Naive thymus-derived CD4-positive, alpha-beta T cell (primary cell): ENCODE measurements at regions of chrX and their contacts with region 1.

Region 1: DNA sequence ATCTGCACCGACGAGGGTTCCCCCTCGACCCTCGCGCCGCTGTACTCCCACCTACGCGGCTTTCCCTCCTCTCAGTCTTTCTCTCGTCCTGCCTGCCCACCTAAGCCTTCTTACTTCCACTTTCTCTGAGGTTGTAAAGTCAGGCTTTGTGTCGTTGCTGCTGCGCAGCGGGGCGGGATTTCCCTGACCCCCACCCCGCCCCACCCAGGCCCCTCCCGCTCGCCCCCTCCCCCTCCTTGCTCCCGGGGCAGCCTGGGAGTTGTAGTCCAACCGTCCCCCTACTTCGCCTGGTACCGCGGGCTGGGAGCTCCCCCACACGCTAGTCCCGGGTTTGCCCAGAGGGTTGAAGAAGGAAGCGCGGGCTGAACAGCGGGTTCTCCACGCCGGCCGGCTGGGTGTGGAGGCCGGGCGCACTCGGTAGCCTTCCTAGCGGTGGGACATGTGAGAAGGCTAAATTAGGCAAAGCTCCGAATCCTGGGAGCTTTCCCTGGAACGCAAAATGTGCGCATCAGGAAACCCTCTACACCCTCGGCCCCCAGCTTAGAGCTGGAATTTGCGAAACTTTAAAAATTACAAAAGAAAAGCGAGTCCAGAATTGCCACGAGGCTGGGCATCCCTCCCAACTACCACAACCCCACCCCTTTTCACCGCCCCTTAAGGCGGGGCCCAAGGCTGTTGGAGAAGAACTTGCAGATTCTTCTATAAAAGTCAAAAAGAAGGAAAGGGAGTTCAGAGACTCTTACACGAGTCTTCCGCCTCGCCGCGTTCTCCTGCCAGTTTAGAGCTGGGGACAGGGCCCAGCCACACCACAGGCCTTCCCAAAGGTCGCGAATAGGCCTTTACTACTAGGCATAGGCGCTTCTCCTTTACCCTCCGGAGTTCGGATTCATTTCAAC is at the start of gene ATP11C:
- DNase-seq: peak; percentile 55 to 81 (median 78)
- ATAC-seq: peak; percentile 92
- H3K4me3 ChIP-seq: peak within 1 kb of the TSS; percentile 75
- H3K4me3 Mint-ChIP-seq: peak within 1 kb of the TSS; percentile 86 to 99 (median 94)
- H3K27ac ChIP-seq: peak within 1 kb of the TSS; percentile 97
- H3K27ac Mint-ChIP-seq: peak within 1 kb of the TSS; percentile 93 to 99 (median 97)
- H3K4me1 ChIP-seq: peaks cover 0 to 8% of the 10 kb centered on the region in 2 donors
- H3K4me1 Mint-ChIP-seq: peaks cover 0 to 35% (median 27%) of the 10 kb centered on the region in 7 donors
- H3K27me3 ChIP-seq: no peaks in the 10 kb centered on the region
- H3K27me3 Mint-ChIP-seq: no peaks in the 10 kb centered on the region
- total RNA-seq, gene ATP11C: 13.8 to 27.5 (median 22.6) TPM

Region 2: DNA sequence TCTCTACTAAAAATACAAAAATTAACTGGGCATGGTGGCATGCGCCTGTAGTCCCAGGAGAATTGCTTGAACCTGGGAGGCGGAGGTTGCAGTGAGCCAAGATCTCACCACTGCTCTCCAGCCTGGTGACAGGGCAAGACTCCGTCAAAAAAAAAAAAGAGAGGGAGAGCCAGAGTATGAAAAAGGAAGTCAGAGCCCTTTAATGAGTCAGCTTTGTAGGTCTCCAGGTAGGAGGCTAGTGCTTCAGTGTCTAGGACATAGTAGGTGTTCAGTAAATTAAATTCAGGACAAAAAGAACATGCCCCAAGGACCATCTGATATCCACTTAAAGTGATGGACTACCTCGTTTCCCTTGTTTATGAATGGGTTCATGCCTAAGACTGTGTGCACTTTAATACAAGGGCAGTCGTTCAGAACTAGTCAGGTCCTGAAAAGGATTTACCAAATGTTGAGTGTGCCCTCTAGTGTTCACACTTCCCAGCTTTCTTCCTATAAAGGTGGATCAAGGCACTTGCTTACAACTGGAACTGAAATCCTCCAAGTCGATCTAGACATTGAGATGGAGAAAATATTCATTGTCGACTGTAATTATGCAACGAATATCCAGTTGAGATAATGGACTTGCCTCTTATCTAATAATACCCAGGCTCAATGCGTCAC is 373.6 kb before region 1 on chrX:
- CTCF ChIA-PET with region 1: no interaction called
- POLR2A ChIA-PET with region 1: no interaction called
- intact Hi-C with region 1: loop called in 1 of 2 experiments (anchors 10 kb)
- DNase-seq: peak in 2 of 9 donors; percentile 7 to 11
- ATAC-seq: no peak
- H3K4me3 ChIP-seq: no peak overlapping the region
- H3K4me3 Mint-ChIP-seq: no peak overlapping the region
- H3K27ac ChIP-seq: no peak overlapping the region
- H3K27ac Mint-ChIP-seq: no peak overlapping the region
- H3K4me1 ChIP-seq: no peaks in the 10 kb centered on the region
- H3K4me1 Mint-ChIP-seq: peaks cover 0 to 3% (median 0%) of the 10 kb centered on the region in 7 donors
- H3K27me3 ChIP-seq: no peaks in the 10 kb centered on the region
- H3K27me3 Mint-ChIP-seq: peaks cover 0 to 8% (median 4%) of the 10 kb centered on the region in 5 donors

Region 3: DNA sequence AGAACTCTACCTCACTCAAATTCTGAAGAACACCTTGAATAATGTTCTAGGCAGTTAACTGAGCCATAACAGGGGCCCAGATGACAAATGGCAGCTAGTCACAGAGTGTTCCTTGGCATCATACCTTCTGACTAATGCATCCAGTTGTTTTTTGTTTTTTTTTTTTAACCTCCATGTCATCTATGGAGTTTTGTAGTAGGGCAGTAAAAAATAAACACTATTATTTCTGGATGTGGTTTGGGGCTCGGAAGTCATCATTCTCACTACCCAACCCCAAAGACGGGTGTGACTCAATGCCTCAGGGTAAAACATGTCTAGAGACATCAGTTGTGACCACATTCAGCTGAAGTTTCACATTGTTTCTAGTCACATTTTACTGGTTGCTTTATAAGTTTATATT is 194.0 kb before region 1 on chrX:
- CTCF ChIA-PET with region 1: no interaction called
- POLR2A ChIA-PET with region 1: no interaction called
- intact Hi-C with region 1: loop called in 1 of 2 experiments (anchors 5 kb)
- DNase-seq: peak in 1 of 9 donors; percentile 21
- ATAC-seq: peak; percentile 47
- H3K4me3 ChIP-seq: no peak overlapping the region
- H3K4me3 Mint-ChIP-seq: peak overlapping the region in 2 of 10 donors; percentile 39 to 46
- H3K27ac ChIP-seq: no peak overlapping the region
- H3K27ac Mint-ChIP-seq: peak overlapping the region in 3 of 9 donors; percentile 39 to 73 (median 41)
- H3K4me1 ChIP-seq: peaks cover 0 to 5% of the 10 kb centered on the region in 2 donors
- H3K4me1 Mint-ChIP-seq: peaks cover 0 to 25% (median 0%) of the 10 kb centered on the region in 7 donors
- H3K27me3 ChIP-seq: no peaks in the 10 kb centered on the region
- H3K27me3 Mint-ChIP-seq: no peaks in the 10 kb centered on the region

Region 4: GRCh38 chrX:139766545-139766983 is 166.6 kb before region 1 on chrX:
- CTCF ChIA-PET with region 1: no interaction called
- POLR2A ChIA-PET with region 1: interaction called, 3 read pairs
- intact Hi-C with region 1: loop called in 1 of 2 experiments (anchors 2 kb)
- DNase-seq: peak in 8 of 9 donors; percentile 10 to 61 (median 42)
- ATAC-seq: peak; percentile 81
- H3K4me3 ChIP-seq: no peak overlapping the region
- H3K4me3 Mint-ChIP-seq: no peak overlapping the region
- H3K27ac ChIP-seq: no peak overlapping the region
- H3K27ac Mint-ChIP-seq: no peak overlapping the region
- H3K4me1 ChIP-seq: peaks cover 0 to 13% of the 10 kb centered on the region in 2 donors
- H3K4me1 Mint-ChIP-seq: peaks cover 0 to 5% (median 0%) of the 10 kb centered on the region in 7 donors
- H3K27me3 ChIP-seq: no peaks in the 10 kb centered on the region
- H3K27me3 Mint-ChIP-seq: no peaks in the 10 kb centered on the region

Region 5: DNA sequence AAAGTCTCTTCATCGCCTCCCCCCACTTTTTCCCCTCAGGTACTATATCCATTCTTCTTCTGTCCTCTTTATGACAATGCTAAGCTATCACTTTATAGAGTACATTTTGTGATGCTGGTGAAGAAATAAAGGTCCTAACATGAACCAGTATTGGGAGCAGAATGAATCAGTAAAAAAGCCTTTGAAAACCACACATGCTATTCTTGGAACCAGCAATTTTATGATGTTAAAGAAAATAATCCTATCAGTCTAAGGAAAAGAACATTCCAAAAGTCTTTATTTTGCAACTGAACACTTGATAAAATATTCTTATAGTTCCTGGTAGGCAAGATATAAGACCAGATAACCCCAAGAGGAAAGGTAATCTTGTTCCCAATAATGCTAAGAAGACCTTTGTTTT is 117.4 kb before region 1 on chrX:
- CTCF ChIA-PET with region 1: no interaction called
- POLR2A ChIA-PET with region 1: interaction called, 3 read pairs
- intact Hi-C with region 1: loop called in 1 of 2 experiments (anchors 5 kb)
- DNase-seq: no peak
- ATAC-seq: no peak
- H3K4me3 ChIP-seq: no peak overlapping the region
- H3K4me3 Mint-ChIP-seq: peak overlapping the region in 4 of 10 donors; percentile 23 to 58 (median 37)
- H3K27ac ChIP-seq: no peak overlapping the region
- H3K27ac Mint-ChIP-seq: peak overlapping the region in 6 of 9 donors; percentile 39 to 84 (median 47)
- H3K4me1 ChIP-seq: peaks cover 3 to 13% of the 10 kb centered on the region in 2 donors
- H3K4me1 Mint-ChIP-seq: peaks cover 10 to 38% (median 26%) of the 10 kb centered on the region in 7 donors
- H3K27me3 ChIP-seq: no peaks in the 10 kb centered on the region
- H3K27me3 Mint-ChIP-seq: no peaks in the 10 kb centered on the region